Prostate gland (tissue), 2 donors: ENCODE measurements at regions of chr7 and their contacts with region 1.

Region 1: DNA sequence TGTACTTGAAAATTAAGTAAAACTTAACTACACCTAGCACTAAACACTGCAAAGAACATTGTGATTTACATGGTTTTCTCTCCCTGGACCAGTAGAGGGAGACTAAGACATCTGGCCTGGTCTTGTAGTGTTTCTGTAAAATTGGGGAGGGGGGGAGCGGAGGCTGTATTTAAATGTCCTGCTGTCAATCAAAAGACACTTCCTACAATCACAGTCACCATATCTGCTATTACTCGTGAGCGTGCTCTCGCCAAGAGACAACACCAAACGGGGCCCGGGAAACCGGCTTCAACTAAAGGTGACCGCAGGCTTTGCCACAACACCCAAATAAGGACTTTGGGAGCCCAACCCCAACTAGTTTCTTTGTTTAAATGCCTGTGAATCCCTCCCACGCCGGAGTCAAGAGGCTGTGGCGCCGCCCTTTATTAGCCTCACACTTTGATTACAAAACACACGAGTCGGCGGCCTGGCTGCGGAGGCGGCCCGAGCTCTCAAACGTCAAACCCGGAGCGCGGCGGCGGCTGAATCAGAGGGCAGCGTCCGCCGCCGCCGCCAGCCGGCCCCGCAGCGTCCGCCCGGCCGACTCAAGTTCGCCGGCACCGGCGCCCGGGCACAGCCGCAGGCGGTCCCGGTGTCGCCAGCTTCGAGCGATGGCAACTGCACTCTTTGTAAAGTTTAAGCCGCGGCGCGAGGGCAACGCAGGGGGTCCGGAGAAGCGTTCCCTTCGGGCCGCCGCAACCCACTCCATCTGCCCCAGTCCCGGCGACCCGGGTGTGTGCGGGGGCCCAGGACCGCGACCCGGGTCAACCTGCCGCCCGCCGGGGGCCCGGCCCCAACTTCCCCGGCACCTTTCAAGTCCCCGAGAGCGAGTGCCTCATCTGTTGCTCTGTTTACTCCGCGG is 1.3 kb downstream of the KDM7A start:
- DNase-seq: peak; percentile 93
- H3K4me3 ChIP-seq: peak overlapping the region; percentile 89 to 91
- H3K27ac ChIP-seq: peak overlapping the region; percentile 98 to 99
- H3K4me1 ChIP-seq: no peaks in the 10 kb centered on the region
- H3K27me3 ChIP-seq: no peaks in the 10 kb centered on the region
- CTCF ChIP-seq: peak; percentile 61 to 94 (median 90)
- POLR2A ChIP-seq: peak; percentile 95

Region 2: GRCh38 chr7:140249036-140249806 is 73.8 kb after region 1 on chr7:
- intact Hi-C with region 1: no loop called
- DNase-seq: no peak
- H3K4me3 ChIP-seq: no peak overlapping the region
- H3K27ac ChIP-seq: no peak overlapping the region
- H3K4me1 ChIP-seq: no peaks in the 10 kb centered on the region
- H3K27me3 ChIP-seq: no peaks in the 10 kb centered on the region
- CTCF ChIP-seq: no peak
- POLR2A ChIP-seq: no peak

Region 3: DNA sequence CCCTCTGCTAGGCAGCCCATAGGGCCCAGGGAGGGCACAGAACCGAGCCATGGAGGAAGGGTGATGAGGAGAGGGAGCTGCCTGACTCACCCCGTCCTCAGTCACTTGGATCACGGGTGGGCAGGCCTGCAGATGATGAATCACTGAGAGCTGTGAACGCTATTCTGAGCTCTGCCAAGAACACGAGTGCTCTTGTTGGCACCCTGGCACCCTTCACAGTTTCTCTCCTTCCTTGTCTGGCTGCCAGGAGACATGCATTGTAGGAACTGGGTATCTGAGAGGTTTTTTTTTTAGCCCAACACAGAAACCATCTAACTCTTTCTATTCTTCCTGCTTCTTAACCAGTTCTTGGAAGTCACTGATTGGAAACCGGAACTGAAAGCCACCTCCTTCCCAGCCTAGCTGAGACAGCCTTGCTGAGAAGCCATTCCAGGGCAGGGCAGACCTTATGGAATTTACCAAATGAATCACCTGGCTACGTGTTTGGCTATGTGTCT is 140.7 kb after region 1 on chr7:
- intact Hi-C with region 1: loop called (anchors 2 kb)
- DNase-seq: peak; percentile 76
- H3K4me3 ChIP-seq: peak overlapping the region in 1 of 2 donors; percentile 4
- H3K27ac ChIP-seq: peak overlapping the region; percentile 30 to 40
- H3K4me1 ChIP-seq: peaks cover 9% of the 10 kb centered on the region
- H3K27me3 ChIP-seq: no peaks in the 10 kb centered on the region
- CTCF ChIP-seq: no peak
- POLR2A ChIP-seq: no peak